Ascending aorta (tissue), 2 donors: ENCODE measurements at regions of chr4 and their contacts with region 1.

Region 1: GRCh38 chr4:142713282-142714030 is 132.6 kb downstream of the INPP4B start:
- DNase-seq: no peak
- H3K4me3 ChIP-seq: no peak overlapping the region
- H3K27ac ChIP-seq: no peak overlapping the region
- H3K4me1 ChIP-seq: no peaks in the 10 kb centered on the region
- H3K27me3 ChIP-seq: no peaks in the 10 kb centered on the region
- CTCF ChIP-seq: no peak

Region 2: DNA sequence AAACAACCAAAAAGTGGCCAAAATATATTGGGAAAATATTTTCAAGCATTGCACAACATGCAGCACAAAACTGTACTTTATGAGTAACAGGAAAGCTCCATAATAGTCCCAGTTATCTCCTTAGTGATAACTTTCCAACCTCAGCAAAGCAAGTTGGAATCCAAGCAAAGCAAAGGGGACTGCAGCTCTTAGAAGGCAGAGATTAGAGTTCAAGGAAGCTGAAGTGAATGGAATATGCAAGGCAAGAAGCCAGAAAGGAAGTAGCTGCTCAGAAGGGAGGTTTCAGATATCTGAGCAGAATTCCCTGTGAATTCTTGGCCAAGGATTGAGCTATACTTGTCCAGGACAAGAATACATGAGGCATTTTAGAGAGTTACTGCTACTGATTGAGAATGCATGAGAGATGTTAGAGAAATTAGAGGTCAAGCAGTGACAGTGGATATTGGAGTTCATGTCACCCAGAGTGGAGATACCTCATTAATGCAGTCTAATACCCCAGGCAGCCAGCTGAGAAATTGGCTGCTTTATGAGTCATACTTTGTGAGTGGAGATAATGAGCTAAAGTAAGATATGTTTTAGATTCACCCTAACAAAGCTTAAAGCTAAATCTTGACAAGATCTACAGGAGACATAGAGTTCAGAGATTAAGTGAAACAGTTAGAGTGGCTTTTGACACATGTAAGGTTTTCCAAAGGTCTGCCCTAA is 29.8 kb after region 1 on chr4:
- intact Hi-C with region 1: loop called (anchors 2 kb)
- DNase-seq: no peak
- H3K4me3 ChIP-seq: no peak overlapping the region
- H3K27ac ChIP-seq: no peak overlapping the region
- H3K4me1 ChIP-seq: no peaks in the 10 kb centered on the region
- H3K27me3 ChIP-seq: no peaks in the 10 kb centered on the region
- CTCF ChIP-seq: no peak